A673 (cell line): ENCODE measurements at regions of chr17 and their contacts with region 1.

Region 1: GRCh38 chr17:64420143-64420971 is 28.6 kb upstream of the MILR1 start:
- DNase-seq: peak; percentile 85
- H3K4me3 ChIP-seq: no peak overlapping the region
- H3K27ac ChIP-seq: no peak overlapping the region
- H3K4me1 ChIP-seq: peaks cover 6% of the 10 kb centered on the region
- H3K27me3 ChIP-seq: no peaks in the 10 kb centered on the region
- CTCF ChIP-seq: peak; percentile 81

Region 2: DNA sequence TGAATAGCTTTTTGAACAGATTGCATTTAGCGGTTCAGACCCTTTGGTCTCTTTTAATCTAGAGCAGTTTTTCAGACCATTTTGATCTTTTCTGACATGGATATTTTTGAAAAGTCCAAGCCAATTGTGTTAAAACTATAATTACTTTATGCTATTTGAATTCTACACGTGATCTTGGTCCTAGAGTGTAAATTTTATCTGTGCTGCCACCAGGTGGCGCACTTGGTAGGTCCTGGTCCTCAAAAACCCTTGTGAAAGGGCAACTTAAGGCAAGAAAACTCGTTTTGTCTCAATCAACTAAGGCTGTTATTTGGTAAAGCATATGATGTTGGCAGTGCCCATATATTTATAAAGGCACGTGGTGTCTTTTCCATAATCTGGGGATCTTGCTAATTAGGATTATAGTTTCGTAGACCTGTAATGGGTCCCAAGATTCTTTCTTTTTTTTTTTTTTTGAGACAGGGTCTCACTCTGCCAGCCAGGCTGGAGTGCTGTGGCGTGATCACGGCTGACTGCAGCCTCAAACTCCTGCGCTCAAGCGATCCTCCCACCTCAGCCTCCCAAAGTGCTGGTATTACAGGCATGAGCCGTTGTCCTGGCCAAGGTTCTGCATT is 113.4 kb before region 1 on chr17:
- CTCF ChIA-PET with region 1: interaction called, 7 read pairs
- POLR2A ChIA-PET with region 1: no interaction called
- intact Hi-C with region 1: loop called (anchors 1 kb)
- DNase-seq: peak; percentile 79
- H3K4me3 ChIP-seq: no peak overlapping the region
- H3K27ac ChIP-seq: no peak overlapping the region
- H3K4me1 ChIP-seq: no peaks in the 10 kb centered on the region
- H3K27me3 ChIP-seq: no peaks in the 10 kb centered on the region
- CTCF ChIP-seq: peak; percentile 87

Region 3: GRCh38 chr17:64491034-64491859 is 70.9 kb after region 1 on chr17:
- CTCF ChIA-PET with region 1: interaction called, 20 read pairs
- POLR2A ChIA-PET with region 1: no interaction called
- intact Hi-C with region 1: loop called (anchors 5 kb)
- DNase-seq: no peak
- H3K4me3 ChIP-seq: no peak overlapping the region
- H3K27ac ChIP-seq: no peak overlapping the region
- H3K4me1 ChIP-seq: peaks cover 11% of the 10 kb centered on the region
- H3K27me3 ChIP-seq: no peaks in the 10 kb centered on the region
- CTCF ChIP-seq: peak; percentile 64

Region 4: GRCh38 chr17:64653325-64653984 is 233.1 kb after region 1 on chr17:
- CTCF ChIA-PET with region 1: no interaction called
- POLR2A ChIA-PET with region 1: no interaction called
- intact Hi-C with region 1: loop called (anchors 1 kb)
- DNase-seq: no peak
- H3K4me3 ChIP-seq: no peak overlapping the region
- H3K27ac ChIP-seq: peak overlapping the region; percentile 65
- H3K4me1 ChIP-seq: no peaks in the 10 kb centered on the region
- H3K27me3 ChIP-seq: no peaks in the 10 kb centered on the region
- CTCF ChIP-seq: no peak

Region 5: DNA sequence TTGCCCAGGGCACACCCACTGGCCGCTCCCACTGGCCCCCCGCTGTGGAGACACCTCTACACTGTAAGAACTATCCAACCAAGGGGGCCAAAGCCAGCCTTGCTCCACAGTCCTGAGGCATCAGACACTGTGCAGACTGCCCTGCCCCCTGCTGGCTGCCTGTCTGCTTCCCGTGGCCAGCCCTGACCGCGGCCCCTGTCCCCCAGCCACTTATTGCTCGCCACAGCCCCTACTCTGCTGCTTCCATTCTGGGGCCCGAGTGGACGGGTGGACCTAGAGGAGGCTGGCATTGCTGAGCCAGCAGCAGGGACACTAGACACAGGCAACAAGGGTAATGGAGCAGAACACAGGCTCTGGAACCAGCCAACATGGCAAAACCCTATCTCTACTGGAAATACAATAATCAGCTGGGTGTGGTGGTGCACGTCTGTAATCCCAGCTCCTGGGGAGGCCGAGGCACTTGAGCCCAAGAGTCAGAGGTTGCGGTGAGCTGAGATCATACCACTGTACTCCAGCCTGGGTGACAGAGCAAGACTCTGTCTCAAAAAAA is 518.6 kb after region 1 on chr17:
- CTCF ChIA-PET with region 1: no interaction called
- POLR2A ChIA-PET with region 1: no interaction called
- intact Hi-C with region 1: loop called (anchors 10 kb)
- DNase-seq: no peak
- H3K4me3 ChIP-seq: no peak overlapping the region
- H3K27ac ChIP-seq: no peak overlapping the region
- H3K4me1 ChIP-seq: no peaks in the 10 kb centered on the region
- H3K27me3 ChIP-seq: no peaks in the 10 kb centered on the region
- CTCF ChIP-seq: peak; percentile 70